ENCODE measurements at regions of chr12 and their contacts with region 1.

Region 1: GRCh38 chr12:56593909-56594621 is 36.1 kb downstream of the BAZ2A start:
- DNase-seq: peak; percentile 28
- H3K4me3 Mint-ChIP-seq: no peak overlapping the region
- H3K27ac Mint-ChIP-seq: no peak overlapping the region
- H3K4me1 Mint-ChIP-seq: no peaks in the 10 kb centered on the region
- H3K27me3 Mint-ChIP-seq: no peaks in the 10 kb centered on the region

Region 2: GRCh38 chr12:56571126-56571525 is 22.9 kb before region 1 on chr12:
- intact Hi-C with region 1: loop called (anchors 1 kb)
- DNase-seq: no peak
- H3K4me3 Mint-ChIP-seq: no peak overlapping the region
- H3K27ac Mint-ChIP-seq: no peak overlapping the region
- H3K4me1 Mint-ChIP-seq: peaks cover 18% of the 10 kb centered on the region
- H3K27me3 Mint-ChIP-seq: no peaks in the 10 kb centered on the region

Region 3: GRCh38 chr12:56645717-56646446 is 51.8 kb after region 1 on chr12 and contains the start of gene ATP5F1B:
- intact Hi-C with region 1: no loop called
- DNase-seq: peak; percentile 91
- H3K4me3 Mint-ChIP-seq: peak within 1 kb of the TSS; percentile 96
- H3K27ac Mint-ChIP-seq: peak within 1 kb of the TSS; percentile 95
- H3K4me1 Mint-ChIP-seq: peaks cover 37% of the 10 kb centered on the region
- H3K27me3 Mint-ChIP-seq: no peaks in the 10 kb centered on the region
- total RNA-seq, gene ATP5F1B: 714 and 716 TPM in 2 replicates

Measured in activated T-helper 1 cell treated with anti-CD3 and anti-CD28 coated beads, Interleukin-12 subunit alpha, Interleukin-12 subunit beta, Interleukin-2, Interleukin-4 antibody, amounts not matched to agents 30 ng/mL and 10 ng/mL and 1 ng/mL, durations not matched to agents 14 hours and 24 hours and 36 hours (primary cell).